ENCODE measurements at regions of chr20 and their contacts with region 1.

Region 1: GRCh38 chr20:62642040-62642665 is at the start of gene SLCO4A1:
- DNase-seq: peak; percentile 98
- H3K4me3 Mint-ChIP-seq: peak within 1 kb of the TSS; percentile 88
- H3K27ac Mint-ChIP-seq: peak within 1 kb of the TSS; percentile 90
- H3K4me1 Mint-ChIP-seq: peaks cover 26% of the 10 kb centered on the region
- H3K27me3 Mint-ChIP-seq: peaks cover 5% of the 10 kb centered on the region
- total RNA-seq, gene SLCO4A1: 57.8 and 67.3 TPM in 2 replicates

Region 2: GRCh38 chr20:62623488-62624324 is 18.4 kb before region 1 on chr20:
- intact Hi-C with region 1: loop called (anchors 1 kb)
- DNase-seq: peak; percentile 96
- H3K4me3 Mint-ChIP-seq: peak overlapping the region; percentile 82
- H3K27ac Mint-ChIP-seq: peak overlapping the region; percentile 99
- H3K4me1 Mint-ChIP-seq: peaks cover 31% of the 10 kb centered on the region
- H3K27me3 Mint-ChIP-seq: no peaks in the 10 kb centered on the region

Region 3: GRCh38 chr20:62652051-62652926 is 10.1 kb after region 1 on chr20:
- intact Hi-C with region 1: loop called (anchors 1 kb)
- DNase-seq: peak; percentile 89
- H3K4me3 Mint-ChIP-seq: peak overlapping the region; percentile 82
- H3K27ac Mint-ChIP-seq: peak overlapping the region; percentile 92
- H3K4me1 Mint-ChIP-seq: peaks cover 44% of the 10 kb centered on the region
- H3K27me3 Mint-ChIP-seq: no peaks in the 10 kb centered on the region

Region 4: DNA sequence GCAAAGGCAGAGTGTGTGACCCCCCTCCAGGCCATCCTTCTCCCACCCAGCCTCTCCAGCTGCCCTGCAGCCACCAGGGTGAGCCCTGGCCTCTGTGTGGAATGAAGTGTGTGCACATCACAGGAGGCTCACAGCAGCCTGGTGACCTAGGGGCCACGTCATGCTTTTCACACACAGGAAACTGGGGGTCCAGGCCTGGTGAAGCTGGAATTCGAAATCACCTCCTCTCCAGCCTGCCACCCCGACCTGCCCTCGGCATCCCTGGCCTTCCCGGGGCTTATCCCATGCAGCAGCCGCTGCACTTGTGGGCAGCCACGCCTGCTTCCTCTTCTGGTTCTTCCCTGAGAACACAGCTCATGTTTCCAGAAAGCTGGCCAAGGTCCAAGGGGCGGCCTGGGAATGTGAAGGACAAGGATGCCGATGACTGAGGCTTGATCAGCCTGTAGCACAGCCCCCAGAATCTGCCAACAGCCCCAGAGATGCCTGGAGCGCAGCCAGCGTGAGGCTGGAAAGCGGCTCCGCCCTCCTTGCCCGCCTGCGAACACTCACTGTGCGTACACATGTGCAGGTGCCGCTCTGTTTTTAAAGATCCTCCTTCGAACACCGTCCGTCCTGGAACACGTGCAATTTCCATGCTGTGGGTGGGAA is 62.3 kb after region 1 on chr20:
- intact Hi-C with region 1: no loop called
- DNase-seq: no peak
- H3K4me3 Mint-ChIP-seq: no peak overlapping the region
- H3K27ac Mint-ChIP-seq: no peak overlapping the region
- H3K4me1 Mint-ChIP-seq: peaks cover 2% of the 10 kb centered on the region
- H3K27me3 Mint-ChIP-seq: peaks cover 19% of the 10 kb centered on the region

Region 5: DNA sequence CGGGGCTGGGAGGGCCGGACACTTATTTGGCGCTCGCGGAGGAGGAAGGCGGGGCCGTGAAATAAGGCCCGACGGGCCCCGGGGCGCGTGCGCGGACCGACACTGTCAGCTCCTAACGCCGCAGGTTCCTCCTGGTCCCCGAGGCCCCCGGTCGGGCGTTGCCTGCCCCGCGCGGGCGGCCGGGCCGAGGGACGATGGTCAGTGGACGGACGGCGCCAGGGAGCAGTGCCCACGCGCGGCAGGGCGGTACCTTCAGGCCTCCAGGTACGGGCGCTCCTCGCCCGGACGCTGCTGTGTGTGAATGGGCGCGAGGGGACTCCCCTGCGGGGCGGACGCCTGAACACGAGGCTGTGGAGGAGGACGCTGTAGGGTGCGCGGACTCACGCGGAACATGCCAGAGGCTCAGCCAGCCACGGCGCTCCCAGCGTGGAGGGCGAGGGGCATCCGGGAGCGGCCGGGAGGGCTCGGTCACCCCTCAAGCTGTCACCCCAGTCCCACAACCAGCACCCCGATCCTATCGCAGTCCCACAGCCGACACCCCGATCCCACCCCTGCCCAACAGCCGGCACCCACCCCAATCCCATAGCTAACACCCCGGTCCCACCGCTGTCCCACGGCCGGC is 985.1 kb after region 1 on chr20:
- intact Hi-C with region 1: no loop called
- DNase-seq: peak; percentile 98
- H3K4me3 Mint-ChIP-seq: peak overlapping the region; percentile 97
- H3K27ac Mint-ChIP-seq: peak overlapping the region; percentile 99
- H3K4me1 Mint-ChIP-seq: peaks cover 20% of the 10 kb centered on the region
- H3K27me3 Mint-ChIP-seq: no peaks in the 10 kb centered on the region

Region 6: DNA sequence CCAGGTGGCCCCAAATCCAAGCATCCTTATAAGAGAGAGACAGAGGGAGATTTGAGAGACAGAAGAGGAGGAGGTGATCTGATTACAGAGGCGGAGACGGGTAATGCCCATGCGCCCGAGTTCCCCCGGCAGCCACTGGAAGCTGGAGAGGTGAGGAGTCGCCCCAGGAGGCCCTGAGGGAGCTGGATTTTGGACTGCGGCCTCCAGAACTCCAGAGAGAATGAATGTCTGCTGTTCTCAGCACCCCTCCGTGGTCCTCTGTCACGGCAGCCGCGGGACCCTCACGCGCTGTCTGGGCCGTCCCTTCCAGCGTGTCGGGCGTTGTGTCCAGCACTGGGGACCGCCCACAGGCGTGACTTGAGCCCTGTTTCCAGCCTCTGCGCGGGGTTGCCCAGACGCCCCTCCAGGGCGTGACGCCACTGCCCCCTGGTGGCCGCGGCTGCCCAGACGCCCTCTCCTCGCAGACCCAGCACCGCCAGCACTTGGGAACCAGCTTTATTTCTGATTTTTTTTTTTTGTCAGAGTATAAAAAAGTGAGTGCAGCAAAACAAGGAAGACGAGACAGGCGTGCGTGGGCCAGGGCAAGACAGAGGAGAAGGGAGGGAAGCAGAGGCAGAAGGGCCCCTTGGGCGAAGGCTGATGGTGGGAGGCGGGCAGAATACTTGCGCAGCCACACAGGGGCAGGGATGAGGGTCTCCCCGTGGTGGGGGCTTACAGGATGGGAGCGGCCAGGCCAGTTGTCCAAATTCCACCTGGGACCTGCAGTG is 1331.7 kb after region 1 on chr20:
- intact Hi-C with region 1: no loop called
- DNase-seq: peak; percentile 94
- H3K4me3 Mint-ChIP-seq: no peak overlapping the region
- H3K27ac Mint-ChIP-seq: peak overlapping the region; percentile 4
- H3K4me1 Mint-ChIP-seq: peaks cover 44% of the 10 kb centered on the region
- H3K27me3 Mint-ChIP-seq: no peaks in the 10 kb centered on the region

Measured in activated CD4-positive, alpha-beta T cell treated with anti-CD3 and anti-CD28 coated beads, Interleukin-2, amount 10 ng/mL, durations not matched to agents 24 days and 14 days (primary cell).